ENCODE measurements at regions of chr19 and their contacts with region 1.

Region 1: GRCh38 chr19:44723952-44724319 is 24.6 kb upstream of the BCL3 start:
- DNase-seq: peak; percentile 86
- ATAC-seq: peak; percentile 84
- H3K4me3 ChIP-seq: no peak overlapping the region
- H3K27ac ChIP-seq: peak overlapping the region; percentile 76
- H3K4me1 ChIP-seq: peaks cover 28% of the 10 kb centered on the region
- H3K27me3 ChIP-seq: no peaks in the 10 kb centered on the region
- CTCF ChIP-seq: peak; percentile 89

Region 2: GRCh38 chr19:44741841-44742352 is 18.0 kb after region 1 on chr19:
- CTCF ChIA-PET with region 1: interaction called, 7 read pairs
- POLR2A ChIA-PET with region 1: interaction called, 10 read pairs
- intact Hi-C with region 1: no loop called
- DNase-seq: peak; percentile 98
- ATAC-seq: peak; percentile 84
- H3K4me3 ChIP-seq: peak overlapping the region; percentile 40; the same call in 1 of the 2 replicates
- H3K27ac ChIP-seq: peak overlapping the region; percentile 99
- H3K4me1 ChIP-seq: peaks cover 45% of the 10 kb centered on the region
- H3K27me3 ChIP-seq: no peaks in the 10 kb centered on the region
- CTCF ChIP-seq: no peak

Region 3: GRCh38 chr19:44747739-44748425 is 23.9 kb after region 1 on chr19:
- CTCF ChIA-PET with region 1: interaction called, 7 read pairs
- POLR2A ChIA-PET with region 1: no interaction called
- intact Hi-C with region 1: loop called (anchors 2 kb)
- DNase-seq: peak; percentile 46
- ATAC-seq: peak; percentile 42
- H3K4me3 ChIP-seq: peak overlapping the region; percentile 80
- H3K27ac ChIP-seq: peak overlapping the region; percentile 100
- H3K4me1 ChIP-seq: peaks cover 57% of the 10 kb centered on the region
- H3K27me3 ChIP-seq: no peaks in the 10 kb centered on the region
- CTCF ChIP-seq: no peak